A673 (cell line): ENCODE measurements at regions of chr12 and their contacts with region 1.

Region 1: GRCh38 chr12:92928962-92929915 is at the start of gene EEA1:
- DNase-seq: peak; percentile 98
- H3K4me3 ChIP-seq: peak within 1 kb of the TSS; percentile 71
- H3K27ac ChIP-seq: peak within 1 kb of the TSS; percentile 95
- H3K4me1 ChIP-seq: peaks cover 16% of the 10 kb centered on the region
- H3K27me3 ChIP-seq: no peaks in the 10 kb centered on the region
- CTCF ChIP-seq: 0 out of 2 replicates have a peak, but pooled peaks have one; percentile 15
- total RNA-seq, gene EEA1: 33.2 and 35.7 TPM in 2 replicates

Region 2: DNA sequence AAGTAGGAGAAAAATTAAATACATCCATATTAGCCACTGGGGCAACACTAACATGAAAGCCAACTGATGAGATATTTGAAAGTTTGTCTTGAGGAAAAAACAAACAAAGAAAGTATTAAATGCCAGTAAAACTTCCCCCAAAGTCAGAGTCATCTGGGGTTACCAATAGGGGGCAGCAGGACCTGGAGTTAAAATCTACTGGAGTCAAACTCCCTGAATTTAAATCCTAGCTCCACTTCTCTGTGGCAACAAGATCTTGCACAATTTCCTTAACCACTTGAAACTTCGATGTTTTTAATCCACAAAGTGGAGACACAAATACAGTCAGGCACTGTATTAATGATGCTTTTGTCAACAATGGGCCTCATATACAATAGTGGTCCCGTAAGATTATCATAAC is 212.0 kb before region 1 on chr12:
- CTCF ChIA-PET with region 1: interaction called, 4 read pairs
- POLR2A ChIA-PET with region 1: no interaction called
- intact Hi-C with region 1: loop called (anchors 5 kb)
- DNase-seq: peak; percentile 77
- H3K4me3 ChIP-seq: no peak overlapping the region
- H3K27ac ChIP-seq: no peak overlapping the region
- H3K4me1 ChIP-seq: peaks cover 4% of the 10 kb centered on the region
- H3K27me3 ChIP-seq: no peaks in the 10 kb centered on the region
- CTCF ChIP-seq: peak; percentile 83

Region 3: DNA sequence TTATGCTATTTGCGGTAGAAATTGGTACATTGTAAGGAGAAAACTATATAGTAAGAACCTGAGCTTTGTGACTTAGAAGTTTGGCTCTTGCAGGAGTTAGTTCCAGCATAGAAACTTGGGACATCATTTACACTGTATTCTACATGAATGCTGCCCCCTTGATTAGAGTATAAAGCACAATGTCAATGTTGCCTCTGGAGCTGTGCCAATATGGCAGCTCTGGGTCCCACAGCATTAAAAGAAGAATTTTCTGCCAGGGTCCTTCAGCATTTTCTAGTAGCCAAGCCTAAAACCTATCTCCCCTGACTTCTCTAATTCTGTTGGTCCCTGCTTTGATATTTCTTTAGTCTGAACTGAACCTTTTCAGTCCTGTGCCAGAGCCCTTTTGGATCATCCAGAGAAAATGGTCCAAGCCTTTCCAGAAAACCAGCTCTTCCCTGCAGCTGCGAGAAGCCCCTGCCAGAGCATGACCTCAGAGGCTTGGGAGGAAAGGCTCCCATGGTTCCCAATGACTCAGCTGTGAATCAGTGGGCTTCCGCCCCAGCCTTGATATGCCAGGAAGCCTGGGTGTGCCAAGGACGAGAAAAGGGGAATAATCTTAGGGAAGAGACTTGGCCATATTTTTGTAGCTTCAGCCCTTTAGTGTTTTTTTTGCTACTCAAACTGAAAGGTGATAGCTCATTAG is 183.2 kb before region 1 on chr12:
- CTCF ChIA-PET with region 1: no interaction called
- POLR2A ChIA-PET with region 1: no interaction called
- intact Hi-C with region 1: no loop called
- DNase-seq: peak; percentile 67
- H3K4me3 ChIP-seq: no peak overlapping the region
- H3K27ac ChIP-seq: no peak overlapping the region
- H3K4me1 ChIP-seq: no peaks in the 10 kb centered on the region
- H3K27me3 ChIP-seq: no peaks in the 10 kb centered on the region
- CTCF ChIP-seq: no peak

Region 4: GRCh38 chr12:92784795-92785562 is 144.3 kb before region 1 on chr12:
- CTCF ChIA-PET with region 1: interaction called, 6 read pairs
- POLR2A ChIA-PET with region 1: no interaction called
- intact Hi-C with region 1: loop called (anchors 5 kb)
- DNase-seq: peak; percentile 88
- H3K4me3 ChIP-seq: no peak overlapping the region
- H3K27ac ChIP-seq: no peak overlapping the region
- H3K4me1 ChIP-seq: no peaks in the 10 kb centered on the region
- H3K27me3 ChIP-seq: no peaks in the 10 kb centered on the region
- CTCF ChIP-seq: peak; percentile 67